GM12878 (cell line): ENCODE measurements at regions of chr17 and their contacts with region 1.

Region 1: GRCh38 chr17:64378890-64379354 is 11.7 kb downstream of the PECAM1 start:
- DNase-seq: peak; percentile 72
- ATAC-seq: peak; percentile 93
- H3K4me3 ChIP-seq: no peak overlapping the region
- H3K27ac ChIP-seq: no peak overlapping the region
- H3K4me1 ChIP-seq: peaks cover 8% of the 10 kb centered on the region
- H3K27me3 ChIP-seq: no peaks in the 10 kb centered on the region
- CTCF ChIP-seq: no peak
- EP300 ChIP-seq: 0 out of 4 replicates have a peak, but pooled peaks of 1 of the 2 experiments have one; percentile 16
- POLR2A ChIP-seq: no peak
- RAD21 ChIP-seq: no peak

Region 2: GRCh38 chr17:64262417-64263260 is 116.3 kb before region 1 on chr17 and contains the start of gene TEX2:
- CTCF ChIA-PET with region 1: no interaction called
- POLR2A ChIA-PET with region 1: no interaction called
- RAD21 ChIA-PET with region 1: no interaction called
- SMC1A ChIA-PET with region 1: no interaction called
- in situ Hi-C with region 1: no loop called
- intact Hi-C with region 1: no loop called
- DNase-seq: no peak
- ATAC-seq: peak; percentile 62
- H3K4me3 ChIP-seq: peak within 1 kb of the TSS; percentile 88
- H3K27ac ChIP-seq: peak within 1 kb of the TSS; percentile 67
- H3K4me1 ChIP-seq: peaks cover 6% of the 10 kb centered on the region; the same call in 1 of the 2 replicates
- H3K27me3 ChIP-seq: no peaks in the 10 kb centered on the region
- CTCF ChIP-seq: no peak
- EP300 ChIP-seq: no peak
- POLR2A ChIP-seq: peak; percentile 70
- RAD21 ChIP-seq: no peak
- polyA plus RNA-seq, gene TEX2: 3.8 to 4.3 TPM

Region 3: DNA sequence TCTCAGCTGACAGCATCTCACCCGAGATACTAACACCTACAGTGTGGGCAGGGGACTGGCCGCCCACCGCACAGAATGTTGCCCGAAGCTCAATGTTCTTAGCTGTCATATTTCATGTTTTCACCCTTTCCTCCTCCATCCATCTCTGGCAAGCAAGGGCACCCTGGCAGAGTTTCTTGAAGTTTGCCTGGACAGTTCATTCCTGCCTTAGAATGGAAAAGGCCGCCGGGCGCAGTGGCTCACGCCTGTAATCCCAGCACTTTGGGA is 78.3 kb before region 1 on chr17:
- CTCF ChIA-PET with region 1: no interaction called
- POLR2A ChIA-PET with region 1: no interaction called
- RAD21 ChIA-PET with region 1: no interaction called
- SMC1A ChIA-PET with region 1: no interaction called
- in situ Hi-C with region 1: no loop called
- intact Hi-C with region 1: no loop called
- DNase-seq: no peak
- ATAC-seq: no peak
- H3K4me3 ChIP-seq: no peak overlapping the region
- H3K27ac ChIP-seq: no peak overlapping the region
- H3K4me1 ChIP-seq: no peaks in the 10 kb centered on the region
- H3K27me3 ChIP-seq: peaks cover 0 to 3% of the 10 kb centered on the region in 2 experiments; a peak in 1 of 4 replicates
- CTCF ChIP-seq: no peak
- EP300 ChIP-seq: no peak
- POLR2A ChIP-seq: no peak
- RAD21 ChIP-seq: no peak

Region 4: GRCh38 chr17:64406321-64407200 is 27.6 kb after region 1 on chr17:
- CTCF ChIA-PET with region 1: interaction called, 3 read pairs
- POLR2A ChIA-PET with region 1: interaction called, 4 read pairs
- RAD21 ChIA-PET with region 1: interaction called, 14 read pairs
- SMC1A ChIA-PET with region 1: interaction called, 11 read pairs
- in situ Hi-C with region 1: no loop called
- intact Hi-C with region 1: loop called (anchors 5 kb)
- DNase-seq: no peak
- ATAC-seq: no peak
- H3K4me3 ChIP-seq: no peak overlapping the region
- H3K27ac ChIP-seq: no peak overlapping the region
- H3K4me1 ChIP-seq: peaks cover 39% of the 10 kb centered on the region
- H3K27me3 ChIP-seq: no peaks in the 10 kb centered on the region
- CTCF ChIP-seq: no peak
- EP300 ChIP-seq: no peak
- POLR2A ChIP-seq: no peak
- RAD21 ChIP-seq: no peak

Region 5: DNA sequence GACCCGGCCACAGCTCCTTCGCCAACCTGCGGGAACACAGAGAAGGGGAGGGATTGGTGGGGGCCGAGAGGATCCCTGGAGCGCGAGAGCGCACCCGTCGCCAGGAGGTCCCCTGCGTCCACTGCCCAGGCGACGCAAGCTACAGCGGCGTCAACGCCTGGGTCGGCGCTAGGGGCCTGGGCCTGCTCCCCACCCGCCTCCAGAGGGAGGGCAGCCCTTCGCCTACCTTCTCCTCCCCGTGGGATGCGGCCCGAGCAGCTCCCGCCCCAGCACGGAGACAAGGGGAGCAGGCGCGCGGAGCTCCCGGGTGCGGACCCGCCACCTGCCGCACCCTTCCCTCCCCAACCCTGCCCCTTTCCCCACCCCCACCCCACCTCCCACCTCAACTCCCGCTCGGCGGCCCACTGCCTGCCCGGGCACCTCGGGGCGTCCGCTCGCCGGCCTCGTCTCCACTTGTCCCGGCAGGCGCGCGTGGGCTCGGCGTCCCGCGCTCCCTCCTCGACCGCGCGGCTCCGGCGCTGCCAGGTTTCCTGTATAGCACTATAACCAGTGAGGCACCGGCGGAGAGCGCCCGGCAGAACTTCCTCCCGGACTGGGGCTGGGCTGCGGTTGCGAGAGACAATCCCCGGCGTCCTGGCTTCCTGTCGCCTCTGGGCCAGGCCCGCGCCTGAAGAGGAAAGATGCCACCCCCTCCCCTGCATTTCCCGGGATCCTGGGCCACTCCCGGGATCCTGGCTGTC is 402.3 kb after region 1 on chr17:
- CTCF ChIA-PET with region 1: no interaction called
- POLR2A ChIA-PET with region 1: no interaction called
- RAD21 ChIA-PET with region 1: no interaction called
- SMC1A ChIA-PET with region 1: no interaction called
- in situ Hi-C with region 1: no loop called
- intact Hi-C with region 1: no loop called
- DNase-seq: no peak
- ATAC-seq: peak; percentile 23
- H3K4me3 ChIP-seq: peak overlapping the region; percentile 60
- H3K27ac ChIP-seq: no peak overlapping the region
- H3K4me1 ChIP-seq: peaks cover 23% of the 10 kb centered on the region
- H3K27me3 ChIP-seq: peaks cover 7 to 12% of the 10 kb centered on the region in 2 experiments; a peak in 3 of 4 replicates
- CTCF ChIP-seq: no peak
- EP300 ChIP-seq: no peak
- POLR2A ChIP-seq: no peak
- RAD21 ChIP-seq: no peak